ENCODE measurements at regions of chr11 and their contacts with region 1.

Region 1: DNA sequence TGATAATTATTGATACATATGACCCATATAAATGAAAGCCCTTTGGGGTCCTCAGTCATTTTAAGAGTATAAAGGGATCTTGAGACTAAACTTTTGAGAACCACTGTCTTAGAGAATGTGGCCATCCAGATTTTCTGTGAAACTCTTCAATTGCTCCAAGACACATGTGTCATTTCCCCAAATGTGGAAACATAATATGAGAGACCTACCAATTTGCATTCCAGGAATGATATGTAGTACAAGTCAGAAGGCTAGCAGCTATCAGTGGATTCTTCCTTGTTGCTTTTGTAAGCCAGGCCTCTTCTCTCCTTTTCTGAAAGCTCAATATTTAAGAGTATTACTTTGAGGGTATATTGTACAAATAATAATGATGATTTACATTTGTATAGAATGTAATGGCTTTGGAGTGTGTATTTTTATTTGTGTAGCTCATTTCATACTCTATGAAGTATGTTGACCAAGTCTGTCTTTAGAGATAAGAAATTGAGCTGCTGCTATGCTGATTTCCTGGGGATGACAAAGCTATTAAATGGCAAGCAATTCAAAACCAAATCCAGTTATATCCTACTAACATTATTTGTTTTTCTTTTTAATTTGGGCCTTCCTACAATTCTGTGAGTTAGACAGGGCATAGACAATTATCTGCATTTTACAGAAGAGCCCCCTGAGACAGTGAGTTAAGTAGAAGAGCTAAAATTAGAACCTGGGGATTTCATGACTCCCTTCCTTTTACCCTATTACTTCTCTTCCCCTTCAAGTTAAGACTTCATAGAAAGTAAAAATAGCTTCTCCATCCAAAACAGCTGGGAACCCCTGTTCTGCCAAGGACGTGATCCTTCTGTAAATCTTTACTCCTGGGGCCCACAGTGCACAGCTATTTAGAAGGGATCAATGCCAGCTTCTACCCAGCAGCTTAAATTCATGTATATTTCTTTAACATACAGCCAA is 131.9 kb downstream of the WNT11 start:
- DNase-seq: no peak
- H3K4me3 Mint-ChIP-seq: no peak overlapping the region
- H3K27ac Mint-ChIP-seq: no peak overlapping the region
- H3K4me1 Mint-ChIP-seq: peaks cover 8% of the 10 kb centered on the region
- H3K27me3 Mint-ChIP-seq: no peaks in the 10 kb centered on the region
- CTCF ChIP-seq: no peak

Region 2: GRCh38 chr11:76030286-76030685 is 44.1 kb before region 1 on chr11:
- CTCF ChIA-PET with region 1: no interaction called
- intact Hi-C with region 1: loop called (anchors 5 kb)
- DNase-seq: peak; percentile 29
- H3K4me3 Mint-ChIP-seq: peak overlapping the region; percentile 25
- H3K27ac Mint-ChIP-seq: peak overlapping the region; percentile 76
- H3K4me1 Mint-ChIP-seq: peaks cover 57% of the 10 kb centered on the region
- H3K27me3 Mint-ChIP-seq: no peaks in the 10 kb centered on the region
- CTCF ChIP-seq: no peak

Region 3: GRCh38 chr11:76090174-76090573 is 15.8 kb after region 1 on chr11:
- CTCF ChIA-PET with region 1: no interaction called
- intact Hi-C with region 1: no loop called
- DNase-seq: no peak
- H3K4me3 Mint-ChIP-seq: no peak overlapping the region
- H3K27ac Mint-ChIP-seq: no peak overlapping the region
- H3K4me1 Mint-ChIP-seq: no peaks in the 10 kb centered on the region
- H3K27me3 Mint-ChIP-seq: no peaks in the 10 kb centered on the region
- CTCF ChIP-seq: no peak